Ascending aorta (tissue), 2 donors: ENCODE measurements at regions of chr4 and their contacts with region 1.

Region 1: GRCh38 chr4:56387023-56388001 is at the start of gene AASDH:
- DNase-seq: peak; percentile 59 to 95
- H3K4me3 ChIP-seq: peak within 1 kb of the TSS; percentile 77 to 86
- H3K27ac ChIP-seq: peak within 1 kb of the TSS; percentile 94 to 96
- H3K4me1 ChIP-seq: peaks cover 0 to 5% of the 10 kb centered on the region in 2 donors
- H3K27me3 ChIP-seq: no peaks in the 10 kb centered on the region
- CTCF ChIP-seq: no peak
- total RNA-seq, gene AASDH: 4.0 TPM

Region 2: DNA sequence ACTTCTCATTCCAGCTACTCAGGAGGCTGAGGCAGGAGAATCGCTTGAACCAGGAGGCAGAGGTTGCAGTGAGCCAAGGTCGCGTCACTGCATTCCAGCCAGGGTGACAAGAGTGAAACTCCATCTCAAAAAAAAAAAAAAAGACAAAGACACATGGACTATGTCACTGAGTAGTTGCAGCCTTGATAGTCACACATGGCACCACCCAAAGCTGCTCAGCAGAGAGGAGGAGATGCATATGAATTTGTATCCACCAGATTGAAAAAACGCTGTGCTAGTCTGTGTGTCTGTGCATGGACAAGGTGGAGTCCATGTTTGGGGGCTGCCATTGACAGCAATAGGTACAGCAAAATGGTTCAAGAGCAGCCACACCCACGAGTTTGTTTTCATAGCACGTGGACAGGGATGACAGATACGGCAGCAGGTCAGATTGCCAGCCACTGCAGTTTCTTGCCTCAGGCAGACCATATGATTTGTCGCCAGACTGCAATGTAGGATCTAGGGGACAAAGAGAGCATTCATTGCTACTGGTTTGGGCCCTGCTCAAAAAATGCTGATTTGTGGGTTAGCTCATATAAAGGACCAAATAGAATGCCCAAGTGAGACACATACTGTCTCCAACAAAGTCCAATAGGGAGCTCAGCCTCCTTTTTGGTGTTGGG is 348.7 kb before region 1 on chr4:
- intact Hi-C with region 1: no loop called
- DNase-seq: no peak
- H3K4me3 ChIP-seq: no peak overlapping the region
- H3K27ac ChIP-seq: no peak overlapping the region
- H3K4me1 ChIP-seq: no peaks in the 10 kb centered on the region
- H3K27me3 ChIP-seq: no peaks in the 10 kb centered on the region
- CTCF ChIP-seq: no peak

Region 3: GRCh38 chr4:56410235-56411062 is 23.1 kb after region 1 on chr4:
- intact Hi-C with region 1: loop called (anchors 1 kb)
- DNase-seq: peak in 1 of 2 donors; percentile 80
- H3K4me3 ChIP-seq: peak overlapping the region; percentile 35 to 55
- H3K27ac ChIP-seq: peak overlapping the region; percentile 34 to 36
- H3K4me1 ChIP-seq: peaks cover 0 to 2% of the 10 kb centered on the region in 2 donors
- H3K27me3 ChIP-seq: no peaks in the 10 kb centered on the region
- CTCF ChIP-seq: no peak

Region 4: DNA sequence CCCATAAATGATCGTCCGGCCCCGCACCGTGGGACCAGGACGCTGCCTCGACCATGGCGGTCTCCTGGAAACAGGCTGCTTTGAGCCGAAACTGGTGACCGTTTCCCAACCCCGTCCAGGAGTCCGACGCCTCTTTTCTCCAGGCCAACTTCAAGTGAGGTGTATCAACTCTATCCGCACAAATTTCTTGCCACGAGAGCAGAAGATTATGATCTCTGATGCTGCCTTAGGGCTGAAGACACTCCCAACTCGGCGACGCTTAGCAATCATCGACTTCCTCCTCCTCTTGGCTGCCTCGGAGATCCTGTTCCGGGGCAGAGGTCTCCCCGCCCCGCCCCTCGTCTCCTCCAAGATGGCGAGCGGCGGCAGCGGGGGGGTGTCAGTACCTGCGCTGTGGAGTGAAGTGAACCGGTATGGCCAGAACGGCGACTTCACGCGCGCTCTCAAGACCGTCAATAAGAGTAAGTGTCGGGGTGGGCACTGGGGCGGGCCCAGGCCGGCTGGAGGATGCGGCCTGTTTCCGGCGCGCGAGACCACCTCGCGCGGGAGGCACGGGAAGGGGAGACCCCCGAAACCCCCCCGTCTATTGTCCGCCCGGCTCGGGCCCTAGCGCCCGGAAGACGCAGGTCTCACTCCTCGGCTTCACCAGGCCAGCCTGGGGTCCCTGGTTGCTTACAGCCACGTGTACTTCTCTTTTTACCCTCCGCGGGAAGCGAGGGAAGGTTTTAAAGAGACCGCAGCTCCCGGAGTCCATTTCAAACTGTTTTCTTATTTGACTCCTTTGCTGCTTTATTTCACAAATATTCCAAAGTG is 80.2 kb after region 1 on chr4 and contains the start of gene SRP72:
- intact Hi-C with region 1: loop called (anchors 1 kb)
- DNase-seq: peak; percentile 66 to 94
- H3K4me3 ChIP-seq: peak within 1 kb of the TSS; percentile 93 to 96
- H3K27ac ChIP-seq: peak within 1 kb of the TSS; percentile 84 to 93
- H3K4me1 ChIP-seq: peaks cover 8 to 22% of the 10 kb centered on the region in 2 donors
- H3K27me3 ChIP-seq: no peaks in the 10 kb centered on the region
- CTCF ChIP-seq: no peak
- total RNA-seq, gene SRP72: 89.4 TPM

Region 5: GRCh38 chr4:56530269-56531148 is 143.2 kb after region 1 on chr4:
- intact Hi-C with region 1: loop called (anchors 2 kb)
- DNase-seq: peak; percentile 48 to 93
- H3K4me3 ChIP-seq: peak overlapping the region; percentile 55 to 63
- H3K27ac ChIP-seq: no peak overlapping the region
- H3K4me1 ChIP-seq: peaks cover 0 to 7% of the 10 kb centered on the region in 2 donors
- H3K27me3 ChIP-seq: no peaks in the 10 kb centered on the region
- CTCF ChIP-seq: no peak